Activated naive CD4-positive, alpha-beta T cell treated with anti-CD3 and anti-CD28 coated beads for 36 hours (primary cell): ENCODE measurements at regions of chr6 and their contacts with region 1.

Region 1: DNA sequence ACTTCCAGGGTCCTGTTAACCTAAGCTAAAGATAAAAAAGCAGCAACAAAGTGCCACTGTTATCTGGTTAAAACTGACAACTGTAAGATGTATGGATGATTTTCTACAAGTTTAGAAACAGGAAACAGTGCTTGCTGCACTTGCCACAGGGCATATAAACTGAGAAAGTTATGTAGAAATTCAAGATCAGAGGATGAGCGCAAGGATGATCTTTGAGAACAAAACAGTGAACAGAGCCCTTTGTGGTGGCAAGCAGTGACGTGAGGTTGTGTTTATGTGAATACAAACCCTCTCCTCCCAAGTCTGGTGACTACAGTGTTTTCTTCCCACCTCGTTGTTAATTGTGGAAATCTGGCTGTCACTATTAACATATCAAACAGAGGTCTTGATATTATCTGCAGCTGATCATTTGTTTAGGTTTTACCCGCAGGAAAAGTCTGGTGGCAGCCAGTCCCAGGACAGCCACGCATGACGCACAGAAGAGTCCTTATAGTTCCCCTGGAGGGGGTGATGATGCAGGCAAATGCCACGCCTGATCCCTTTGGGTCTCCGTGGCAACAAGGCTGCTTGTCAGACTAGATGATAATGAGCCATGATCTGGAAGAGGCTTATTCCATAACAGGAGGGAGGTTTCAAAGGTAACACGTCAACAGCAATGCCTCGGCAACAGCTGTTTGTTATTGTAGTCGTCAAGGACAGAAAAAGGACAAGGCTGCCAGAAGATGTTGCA is 43.1 kb upstream of the TNFAIP3 start:
- DNase-seq: peak; percentile 84
- H3K4me3 Mint-ChIP-seq: peak overlapping the region; percentile 67
- H3K27ac Mint-ChIP-seq: peak overlapping the region; percentile 95
- H3K4me1 Mint-ChIP-seq: peaks cover 81% of the 10 kb centered on the region
- H3K27me3 Mint-ChIP-seq: no peaks in the 10 kb centered on the region

Region 2: DNA sequence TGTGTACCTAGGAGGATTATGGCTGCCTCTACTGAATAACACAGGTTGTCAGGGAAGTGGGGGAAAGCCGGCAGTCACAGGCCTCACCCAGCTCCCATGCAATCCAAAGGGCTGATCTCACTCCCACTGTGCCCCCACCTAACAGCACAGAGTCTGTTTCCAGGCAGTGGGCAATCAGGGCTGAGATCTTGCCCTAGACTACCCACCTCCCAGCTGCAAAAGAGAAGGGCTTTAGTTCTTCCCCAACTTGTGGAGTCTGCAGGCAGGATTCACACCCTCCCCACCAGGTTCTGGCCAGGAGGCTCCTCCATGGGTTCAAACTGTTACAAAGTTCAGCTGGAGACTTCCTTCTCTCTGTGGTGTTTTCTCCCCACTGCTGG is 263.8 kb before region 1 on chr6:
- CTCF ChIA-PET with region 1: no interaction called
- intact Hi-C with region 1: no loop called
- DNase-seq: no peak
- H3K4me3 Mint-ChIP-seq: no peak overlapping the region
- H3K27ac Mint-ChIP-seq: peak overlapping the region; percentile 89
- H3K4me1 Mint-ChIP-seq: peaks cover 33% of the 10 kb centered on the region
- H3K27me3 Mint-ChIP-seq: no peaks in the 10 kb centered on the region

Region 3: DNA sequence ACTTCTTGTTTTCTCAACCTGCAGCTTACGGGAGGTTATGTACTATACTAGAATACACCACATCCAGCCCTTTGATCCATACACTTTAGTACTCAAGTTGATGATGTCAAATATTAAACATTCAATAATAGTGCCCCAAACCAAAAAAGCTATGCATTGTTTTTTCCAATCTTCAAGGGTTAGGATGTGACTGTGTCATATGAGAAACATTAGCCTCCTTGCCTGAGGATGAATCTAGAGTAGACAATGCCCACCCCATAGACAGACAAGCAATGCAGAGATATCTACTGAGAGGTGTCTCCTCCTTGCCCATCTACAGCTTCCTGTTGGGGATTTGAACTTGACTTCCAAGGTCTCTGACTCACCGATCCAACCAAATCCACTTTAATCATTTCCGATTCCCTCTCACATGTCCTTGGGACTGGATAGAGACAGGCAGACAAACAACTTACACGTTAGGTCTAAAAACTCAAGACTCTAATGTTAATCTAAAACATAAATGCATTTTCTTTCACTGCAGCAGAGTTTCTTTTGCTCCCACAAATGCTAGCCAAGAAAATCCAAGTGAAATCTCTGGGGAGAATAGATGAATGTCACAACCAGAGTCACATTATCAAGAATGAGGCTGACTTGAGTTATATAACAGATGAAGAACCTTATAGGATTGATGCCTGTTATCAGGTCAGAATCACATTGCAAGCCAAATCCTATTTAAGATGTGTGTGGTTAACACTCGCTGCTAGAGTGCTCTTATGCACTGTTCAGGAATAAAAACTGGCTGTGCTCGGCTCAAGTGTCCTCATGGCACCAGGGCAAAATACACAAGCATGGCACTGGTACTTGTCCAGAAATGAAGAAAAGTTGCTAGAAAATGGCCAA is 32.5 kb before region 1 on chr6:
- CTCF ChIA-PET with region 1: interaction called, 4 read pairs
- intact Hi-C with region 1: loop called (anchors 1 kb)
- DNase-seq: no peak
- H3K4me3 Mint-ChIP-seq: no peak overlapping the region
- H3K27ac Mint-ChIP-seq: peak overlapping the region; percentile 5
- H3K4me1 Mint-ChIP-seq: peaks cover 51% of the 10 kb centered on the region
- H3K27me3 Mint-ChIP-seq: no peaks in the 10 kb centered on the region

Region 4: DNA sequence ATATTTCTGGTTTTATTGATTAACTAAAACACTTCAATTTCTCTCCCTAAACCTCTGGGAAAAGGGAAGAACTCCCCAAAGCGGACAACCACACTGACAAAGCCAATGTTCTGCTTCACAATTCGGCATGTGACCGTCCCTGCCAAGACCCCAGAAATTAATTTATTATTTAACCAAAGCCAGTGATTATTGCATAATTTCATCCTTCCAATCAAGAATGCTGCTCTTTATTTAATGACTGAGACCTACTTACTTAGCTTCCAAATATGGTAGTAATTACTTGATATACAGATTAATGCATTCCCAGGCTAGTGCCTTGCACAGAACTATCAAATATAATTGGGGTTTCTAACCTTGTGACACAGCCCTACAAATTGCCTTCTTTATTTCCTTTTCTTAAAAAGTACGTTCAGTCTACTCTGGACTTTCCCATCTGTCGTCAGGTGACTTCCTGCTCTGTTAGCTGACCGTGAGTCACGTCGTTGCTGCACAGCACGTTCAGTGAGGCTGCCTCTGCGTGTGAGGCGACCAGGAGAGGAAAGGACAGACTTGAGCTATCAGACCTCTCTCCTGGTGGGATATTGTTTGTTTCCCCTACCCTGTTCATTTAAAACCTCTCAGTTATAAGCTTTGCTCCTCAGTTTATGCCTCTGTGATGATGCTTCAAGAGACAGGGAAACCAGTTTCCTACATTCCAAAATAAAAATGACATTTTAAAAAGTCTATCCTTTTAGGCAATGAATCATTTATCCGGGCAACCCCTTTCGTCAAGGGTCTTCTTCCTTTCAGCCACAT is 12.7 kb before region 1 on chr6:
- CTCF ChIA-PET with region 1: interaction called, 6 read pairs
- intact Hi-C with region 1: loop called (anchors 1 kb)
- DNase-seq: peak; percentile 93
- H3K4me3 Mint-ChIP-seq: peak overlapping the region; percentile 52
- H3K27ac Mint-ChIP-seq: peak overlapping the region; percentile 94
- H3K4me1 Mint-ChIP-seq: peaks cover 75% of the 10 kb centered on the region
- H3K27me3 Mint-ChIP-seq: no peaks in the 10 kb centered on the region

Region 5: DNA sequence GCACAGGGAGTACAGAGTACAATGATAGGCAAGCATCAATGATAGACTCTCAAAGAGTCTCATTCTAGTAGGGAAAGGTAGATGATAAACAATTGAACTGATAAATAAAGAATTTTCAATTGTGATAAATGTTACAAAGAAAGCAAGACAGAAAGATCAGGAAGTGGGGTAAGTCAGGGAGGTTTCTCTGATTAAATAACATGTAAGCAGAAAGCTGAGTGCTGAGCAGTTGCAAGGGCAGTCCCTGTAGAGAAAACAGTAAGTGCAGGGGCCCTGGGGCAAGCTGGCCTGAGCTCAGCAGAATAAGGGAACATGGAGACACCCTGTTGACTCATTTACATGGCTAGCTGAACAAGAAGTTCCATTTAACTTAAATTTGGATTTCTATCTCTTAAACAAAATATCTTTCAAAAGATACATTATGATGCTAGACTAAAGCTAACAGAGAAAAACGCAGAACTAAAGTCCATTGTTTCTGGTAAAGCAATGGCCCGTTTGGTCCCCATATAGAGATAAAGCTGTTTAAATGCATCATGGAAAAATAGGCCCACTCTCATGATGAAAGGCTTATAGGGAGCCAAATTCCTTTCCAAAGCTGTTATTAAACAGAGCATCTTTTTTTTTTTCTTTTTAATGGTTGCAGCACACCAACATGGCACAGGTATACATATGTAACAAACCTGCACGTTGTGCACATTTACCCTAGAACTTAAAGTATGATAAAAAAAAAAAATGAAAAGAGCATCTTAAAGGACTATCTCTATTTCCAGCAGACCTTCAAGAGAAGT is 37.8 kb after region 1 on chr6:
- CTCF ChIA-PET with region 1: interaction called, 23 read pairs
- intact Hi-C with region 1: loop called (anchors 1 kb)
- DNase-seq: no peak
- H3K4me3 Mint-ChIP-seq: no peak overlapping the region
- H3K27ac Mint-ChIP-seq: no peak overlapping the region
- H3K4me1 Mint-ChIP-seq: peaks cover 40% of the 10 kb centered on the region
- H3K27me3 Mint-ChIP-seq: no peaks in the 10 kb centered on the region

Region 6: DNA sequence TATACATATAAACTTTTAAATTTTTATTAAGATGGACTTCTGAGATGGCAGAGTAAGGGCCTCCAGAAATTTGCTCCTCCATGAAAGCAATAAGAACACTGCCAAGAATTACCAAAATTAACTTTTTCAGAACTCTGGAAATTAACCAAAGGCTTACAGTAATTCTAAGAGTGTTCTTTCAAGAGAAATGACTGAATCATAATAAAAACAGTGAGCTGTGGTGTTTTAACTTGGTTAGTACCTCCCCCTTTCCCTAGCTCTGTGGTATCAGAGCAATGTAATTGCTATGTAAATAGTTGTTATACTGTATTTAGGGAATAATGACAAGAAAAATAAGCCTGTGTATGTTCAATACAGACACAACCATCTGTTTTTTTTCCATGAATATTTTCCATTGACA is 1329.9 kb after region 1 on chr6:
- CTCF ChIA-PET with region 1: no interaction called
- intact Hi-C with region 1: loop called (anchors 10 kb)
- DNase-seq: no peak
- H3K4me3 Mint-ChIP-seq: no peak overlapping the region
- H3K27ac Mint-ChIP-seq: peak overlapping the region; percentile 89
- H3K4me1 Mint-ChIP-seq: peaks cover 81% of the 10 kb centered on the region
- H3K27me3 Mint-ChIP-seq: no peaks in the 10 kb centered on the region